ENCODE measurements at regions of chr2 and their contacts with region 1.

Region 1: GRCh38 chr2:96251721-96252292 is 14.0 kb downstream of the TMEM127 start:
- DNase-seq: peak; percentile 91 to 92
- ATAC-seq: peak; percentile 93
- H3K4me3 ChIP-seq: no peak overlapping the region
- H3K27ac ChIP-seq: peak overlapping the region in 1 of 2 donors; percentile 73
- H3K4me1 ChIP-seq: peaks cover 0 to 3% of the 10 kb centered on the region in 2 donors
- H3K27me3 ChIP-seq: no peaks in the 10 kb centered on the region

Region 2: GRCh38 chr2:96145036-96145847 is 106.6 kb before region 1 on chr2 and contains the start of gene DUSP2:
- intact Hi-C with region 1: loop called in 1 of 2 experiments (anchors 5 kb)
- DNase-seq: peak; percentile 88 to 92
- ATAC-seq: peak; percentile 75
- H3K4me3 ChIP-seq: peak within 1 kb of the TSS; percentile 18 to 23
- H3K27ac ChIP-seq: peak within 1 kb of the TSS; percentile 6 to 26
- H3K4me1 ChIP-seq: no peaks in the 10 kb centered on the region
- H3K27me3 ChIP-seq: no peaks in the 10 kb centered on the region
- total RNA-seq, gene DUSP2: 5.7 to 7.5 TPM

Region 3: GRCh38 chr2:96208143-96209010 is 43.4 kb before region 1 on chr2 and contains the start of gene STARD7:
- intact Hi-C with region 1: loop called (anchors 2 to 5 kb)
- DNase-seq: peak; percentile 99 to 100
- ATAC-seq: peak; percentile 98
- H3K4me3 ChIP-seq: peak within 1 kb of the TSS; percentile 71 to 77
- H3K27ac ChIP-seq: peak within 1 kb of the TSS; percentile 6 to 80
- H3K4me1 ChIP-seq: no peaks in the 10 kb centered on the region
- H3K27me3 ChIP-seq: no peaks in the 10 kb centered on the region
- total RNA-seq, gene STARD7: 69.3 to 72.7 TPM

Region 4: GRCh38 chr2:96213379-96213778 is 38.4 kb before region 1 on chr2:
- intact Hi-C with region 1: loop called (anchors 2 to 5 kb)
- DNase-seq: no peak
- ATAC-seq: no peak
- H3K4me3 ChIP-seq: no peak overlapping the region
- H3K27ac ChIP-seq: no peak overlapping the region
- H3K4me1 ChIP-seq: no peaks in the 10 kb centered on the region
- H3K27me3 ChIP-seq: no peaks in the 10 kb centered on the region

Measured in aorta (tissue), 5 donors.